Activated CD8-positive, alpha-beta T cell treated with anti-CD3 and anti-CD28 coated beads, Interleukin-2, amount 10 ng/mL, durations not matched to agents 7 days and 5 days (primary cell): ENCODE measurements at regions of chr17 and their contacts with region 1.

Region 1: DNA sequence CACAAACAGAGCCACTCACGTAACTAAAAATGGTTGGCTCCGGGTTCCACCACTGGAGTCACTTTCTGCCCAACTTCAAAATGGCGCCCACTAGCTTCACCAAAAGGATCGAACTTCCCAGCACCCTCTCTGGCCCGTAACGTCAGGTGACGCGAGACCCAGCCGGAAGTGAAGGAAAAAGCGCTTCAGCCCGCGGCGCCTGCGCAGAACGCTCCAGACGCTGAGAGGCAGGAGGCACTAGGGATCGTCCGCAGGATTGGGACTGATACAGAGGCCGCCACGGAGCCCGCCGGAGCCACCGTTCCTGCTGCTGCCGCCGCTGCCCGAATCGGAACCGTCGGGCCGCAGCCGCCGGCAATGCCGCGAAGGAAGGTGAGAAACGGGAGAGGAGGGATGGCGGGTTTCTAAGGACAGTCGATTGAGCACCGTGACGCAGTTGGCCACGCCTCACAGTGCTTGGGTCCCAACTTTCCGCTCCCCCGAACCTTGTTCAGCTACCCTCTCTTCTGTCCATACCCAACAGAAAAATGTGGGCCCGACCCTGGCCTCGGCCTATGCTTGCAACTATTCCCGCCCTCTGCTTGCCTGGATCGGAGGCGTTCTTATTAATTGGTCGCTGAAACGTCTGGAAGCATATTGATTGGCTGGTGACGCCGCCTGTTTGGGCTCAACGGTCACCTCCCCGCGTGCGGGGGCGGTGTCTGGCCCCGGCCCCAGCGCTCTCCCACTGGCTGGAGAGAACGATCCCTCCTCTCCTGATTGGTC is at the start of gene KAT7:
- DNase-seq: peak; percentile 99
- ATAC-seq: peak; percentile 96
- H3K4me3 Mint-ChIP-seq: peak within 1 kb of the TSS; percentile 94
- H3K27ac Mint-ChIP-seq: peak within 1 kb of the TSS; percentile 96
- H3K4me1 Mint-ChIP-seq: peaks cover 51% of the 10 kb centered on the region
- H3K27me3 Mint-ChIP-seq: no peaks in the 10 kb centered on the region
- total RNA-seq, gene KAT7: 75.8 to 76.0 TPM

Region 2: DNA sequence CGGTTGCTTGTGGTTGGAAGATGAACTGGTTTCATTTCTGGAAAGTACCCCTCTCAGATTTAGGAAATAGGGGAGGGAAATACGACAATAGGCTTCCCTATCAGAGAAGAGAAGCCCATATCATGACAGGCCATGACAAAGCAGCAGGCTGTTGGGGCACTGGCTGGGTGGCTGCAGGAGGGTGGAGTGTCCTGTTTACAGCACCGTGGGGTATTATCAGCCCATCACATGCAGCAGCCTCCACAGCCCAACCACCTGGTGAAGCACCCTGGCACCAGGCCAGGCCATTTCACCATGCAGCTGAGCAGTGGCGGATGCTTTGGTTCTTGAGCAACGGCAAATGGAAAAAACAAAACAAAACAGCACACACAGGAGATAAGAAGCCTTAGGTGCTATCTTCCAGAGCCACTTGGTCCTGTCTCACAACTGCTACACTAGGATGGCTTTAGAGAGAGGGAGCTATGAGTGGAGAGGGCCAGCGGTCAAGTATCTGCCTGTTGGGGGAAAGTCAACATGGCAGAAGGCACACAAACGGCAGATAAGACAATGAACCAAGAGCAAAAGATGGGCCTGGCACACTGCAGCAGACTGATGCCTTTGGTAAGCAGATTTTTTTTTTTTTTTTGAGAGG is 48.9 kb before region 1 on chr17:
- CTCF ChIA-PET with region 1: interaction called, 3 read pairs
- POLR2A ChIA-PET with region 1: interaction called, 41 read pairs
- DNase-seq: peak; percentile 92
- ATAC-seq: peak; percentile 93
- H3K4me3 Mint-ChIP-seq: peak overlapping the region; percentile 84
- H3K27ac Mint-ChIP-seq: peak overlapping the region; percentile 98
- H3K4me1 Mint-ChIP-seq: peaks cover 80% of the 10 kb centered on the region
- H3K27me3 Mint-ChIP-seq: no peaks in the 10 kb centered on the region

Region 3: GRCh38 chr17:49748791-49749190 is 39.9 kb before region 1 on chr17:
- CTCF ChIA-PET with region 1: interaction called, 12 read pairs
- POLR2A ChIA-PET with region 1: interaction called, 24 read pairs
- DNase-seq: peak; percentile 77
- ATAC-seq: peak; percentile 79
- H3K4me3 Mint-ChIP-seq: peak overlapping the region; percentile 68
- H3K27ac Mint-ChIP-seq: peak overlapping the region; percentile 89
- H3K4me1 Mint-ChIP-seq: peaks cover 77% of the 10 kb centered on the region
- H3K27me3 Mint-ChIP-seq: no peaks in the 10 kb centered on the region